ENCODE measurements at regions of chr2 and their contacts with region 1.

Region 1: GRCh38 chr2:193315428-193316091 is 1120.8 kb upstream of the TMEFF2 start:
- DNase-seq: no peak
- ATAC-seq: no peak
- H3K4me3 ChIP-seq: no peak overlapping the region
- H3K27ac ChIP-seq: no peak overlapping the region
- H3K4me1 ChIP-seq: no peaks in the 10 kb centered on the region
- H3K27me3 ChIP-seq: no peaks in the 10 kb centered on the region
- CTCF ChIP-seq: no peak

Region 2: GRCh38 chr2:192687015-192687414 is 628.5 kb before region 1 on chr2:
- CTCF ChIA-PET with region 1: no interaction called
- POLR2A ChIA-PET with region 1: no interaction called
- intact Hi-C with region 1: no loop called
- DNase-seq: no peak
- ATAC-seq: no peak
- H3K4me3 ChIP-seq: no peak overlapping the region
- H3K27ac ChIP-seq: no peak overlapping the region
- H3K4me1 ChIP-seq: no peaks in the 10 kb centered on the region
- H3K27me3 ChIP-seq: no peaks in the 10 kb centered on the region
- CTCF ChIP-seq: no peak

Region 3: DNA sequence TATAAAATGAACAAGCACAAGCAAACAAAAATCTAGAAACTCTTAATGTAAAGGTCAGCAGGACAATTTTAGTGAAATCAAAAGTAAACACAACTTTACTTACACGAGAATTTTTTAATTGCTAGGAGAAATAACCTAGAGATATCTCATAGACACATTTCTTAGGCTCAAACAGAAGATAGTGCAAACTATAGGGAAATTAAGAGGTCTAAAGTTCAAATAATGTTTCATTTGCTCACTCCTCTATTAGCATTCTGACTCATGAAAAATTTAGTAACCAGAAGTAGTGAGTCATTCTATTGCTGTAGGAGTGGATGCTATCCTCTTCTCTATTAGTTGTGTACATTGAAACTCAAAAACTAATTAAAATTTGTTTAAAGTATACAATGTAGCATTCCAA is 212.5 kb before region 1 on chr2:
- CTCF ChIA-PET with region 1: no interaction called
- POLR2A ChIA-PET with region 1: no interaction called
- intact Hi-C with region 1: loop called (anchors 10 kb)
- DNase-seq: peak; percentile 75
- ATAC-seq: peak; percentile 96
- H3K4me3 ChIP-seq: no peak overlapping the region
- H3K27ac ChIP-seq: no peak overlapping the region
- H3K4me1 ChIP-seq: peaks cover 12% of the 10 kb centered on the region
- H3K27me3 ChIP-seq: no peaks in the 10 kb centered on the region
- CTCF ChIP-seq: no peak

Measured in PC-3 (cell line).